H1 (cell line): ENCODE measurements at regions of chr3 and their contacts with region 1.

Region 1: DNA sequence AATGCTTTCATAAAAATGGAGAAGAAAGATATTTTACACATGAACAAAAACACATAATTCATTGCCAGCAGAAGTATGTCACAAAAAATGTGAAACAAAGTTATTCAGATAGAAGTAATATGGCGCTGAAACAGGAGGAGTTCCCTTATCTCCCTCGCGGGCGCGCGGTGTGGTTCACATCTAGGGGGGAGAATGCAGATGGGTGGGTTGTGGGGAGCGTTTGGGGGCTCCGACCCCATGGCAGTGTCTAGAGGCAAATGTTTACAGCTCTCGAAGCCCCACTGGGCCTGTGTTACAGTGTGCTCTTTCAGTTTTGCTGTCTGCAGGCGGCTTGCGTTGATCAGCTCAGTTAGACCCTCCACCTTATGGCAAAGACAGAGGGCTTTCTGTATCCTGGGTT is 297.5 kb downstream of the CGGBP1 start:
- DNase-seq: no peak
- H3K4me3 ChIP-seq: no peak overlapping the region
- H3K27ac ChIP-seq: no peak overlapping the region
- H3K4me1 ChIP-seq: no peaks in the 10 kb centered on the region
- H3K27me3 ChIP-seq: no peaks in the 10 kb centered on the region
- CTCF ChIP-seq: no peak
- EP300 ChIP-seq: no peak
- POLR2A ChIP-seq: no peak
- RAD21 ChIP-seq: no peak

Region 2: DNA sequence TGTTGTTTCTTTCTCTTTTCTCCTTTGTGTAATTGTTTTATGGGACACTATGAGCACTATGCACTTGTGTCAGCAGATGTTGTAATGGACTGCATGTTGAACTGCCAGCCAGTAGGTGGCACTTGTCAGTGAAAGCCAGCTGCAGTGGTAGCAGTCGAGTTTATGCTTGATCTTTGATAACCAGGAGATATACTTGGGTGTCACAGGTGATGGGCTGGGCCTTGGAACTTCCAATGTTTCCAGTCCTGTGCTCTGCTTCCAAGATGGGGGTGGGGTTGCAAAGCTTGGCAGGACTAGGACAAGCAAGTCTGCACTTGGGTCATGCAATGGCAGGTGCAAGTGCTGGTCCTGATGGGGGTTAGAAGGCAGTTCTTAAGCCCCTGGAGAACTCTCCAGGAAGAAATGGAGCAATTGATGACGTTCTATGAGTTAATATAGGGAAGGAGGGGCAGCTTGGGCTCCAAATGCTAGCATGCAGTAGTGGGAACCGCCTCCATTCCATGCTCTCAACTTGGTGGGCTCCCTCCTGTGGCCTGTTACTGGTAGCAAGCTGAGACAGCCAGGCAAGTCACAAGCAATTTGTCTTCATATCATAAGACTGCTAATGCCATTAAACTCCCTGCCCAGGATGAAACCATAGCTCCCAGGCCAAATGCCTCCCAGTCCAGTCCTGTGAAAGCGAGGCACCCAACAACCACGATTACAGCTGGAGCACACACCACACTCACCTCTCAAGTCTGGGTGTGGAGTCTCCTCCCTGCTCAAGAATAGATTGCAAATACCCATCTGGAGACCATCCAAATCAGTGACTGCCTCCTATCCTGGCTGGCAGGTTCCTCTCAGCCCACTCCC is 10.2 kb after region 1 on chr3:
- CTCF ChIA-PET with region 1: interaction called, 29 read pairs
- POLR2A ChIA-PET with region 1: no interaction called
- DNase-seq: peak in 1 of 2 experiments; percentile 52
- H3K4me3 ChIP-seq: no peak overlapping the region
- H3K27ac ChIP-seq: no peak overlapping the region
- H3K4me1 ChIP-seq: peaks cover 0 to 2% (median 0%) of the 10 kb centered on the region in 4 experiments; a peak in 1 of 7 replicates
- H3K27me3 ChIP-seq: no peaks in the 10 kb centered on the region
- CTCF ChIP-seq: peak; percentile 70 to 88 (median 75)
- EP300 ChIP-seq: no peak
- POLR2A ChIP-seq: no peak
- RAD21 ChIP-seq: peak; percentile 64 to 67

Region 3: DNA sequence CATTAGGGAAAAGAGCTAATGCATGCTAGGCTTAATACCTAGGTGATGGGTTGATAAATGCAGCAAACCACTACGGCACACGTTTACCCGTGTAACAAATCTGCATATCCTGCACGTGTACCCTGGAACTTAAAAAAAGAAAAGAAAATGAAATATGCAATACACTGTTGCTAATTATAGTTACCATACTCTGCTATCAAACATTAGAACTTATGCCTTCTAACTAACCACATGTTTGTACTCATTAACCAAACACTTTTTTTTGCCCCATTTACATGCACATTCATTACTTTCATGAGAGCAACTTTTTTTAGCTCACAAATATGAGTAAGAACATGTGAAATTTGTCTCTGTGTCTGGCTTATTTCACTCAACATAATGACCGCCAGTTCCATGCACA is 44.3 kb after region 1 on chr3:
- CTCF ChIA-PET with region 1: no interaction called
- POLR2A ChIA-PET with region 1: no interaction called
- DNase-seq: no peak
- H3K4me3 ChIP-seq: no peak overlapping the region
- H3K27ac ChIP-seq: no peak overlapping the region
- H3K4me1 ChIP-seq: no peaks in the 10 kb centered on the region; a peak in 1 of 7 replicates
- H3K27me3 ChIP-seq: no peaks in the 10 kb centered on the region
- CTCF ChIP-seq: no peak
- EP300 ChIP-seq: no peak
- POLR2A ChIP-seq: no peak
- RAD21 ChIP-seq: no peak